Heart right ventricle (tissue), 16 donors: ENCODE measurements at regions of chr1 and their contacts with region 1.

Region 1: DNA sequence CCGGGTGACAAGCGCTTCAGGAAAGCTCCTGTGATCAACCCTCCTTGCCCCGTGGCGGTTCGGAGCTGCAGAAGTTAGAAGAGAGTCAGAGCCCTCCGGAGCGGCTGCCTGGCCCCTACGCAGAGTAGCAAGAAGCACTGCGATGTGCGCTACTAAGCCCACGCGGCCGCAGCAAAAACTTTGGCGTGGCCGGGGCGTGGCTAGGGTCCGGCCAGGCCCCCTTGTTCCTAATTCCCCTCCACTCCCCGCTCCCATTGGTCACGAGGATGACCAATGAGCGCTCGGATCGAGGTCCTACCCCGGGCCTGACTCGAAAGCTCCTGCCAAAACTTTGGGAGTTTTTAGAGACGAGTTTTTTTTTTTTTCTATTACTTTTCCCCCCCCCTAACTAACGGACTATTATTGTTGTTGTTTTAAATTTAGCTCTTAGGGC is at the start of gene HLX:
- DNase-seq: peak; percentile 90 to 95
- ATAC-seq: peak; percentile 87 to 95 (median 92)
- H3K4me3 ChIP-seq: peak within 1 kb of the TSS; percentile 70 to 98 (median 80)
- H3K27ac ChIP-seq: peak within 1 kb of the TSS; percentile 94 to 99 (median 97)
- H3K4me1 ChIP-seq: peaks cover 0 to 71% (median 37%) of the 10 kb centered on the region in 9 donors
- H3K27me3 ChIP-seq: peaks cover 0 to 26% (median 0%) of the 10 kb centered on the region in 7 donors
- CTCF ChIP-seq: no peak
- total RNA-seq, gene HLX: 4.3 to 13.8 (median 6.7) TPM

Region 2: DNA sequence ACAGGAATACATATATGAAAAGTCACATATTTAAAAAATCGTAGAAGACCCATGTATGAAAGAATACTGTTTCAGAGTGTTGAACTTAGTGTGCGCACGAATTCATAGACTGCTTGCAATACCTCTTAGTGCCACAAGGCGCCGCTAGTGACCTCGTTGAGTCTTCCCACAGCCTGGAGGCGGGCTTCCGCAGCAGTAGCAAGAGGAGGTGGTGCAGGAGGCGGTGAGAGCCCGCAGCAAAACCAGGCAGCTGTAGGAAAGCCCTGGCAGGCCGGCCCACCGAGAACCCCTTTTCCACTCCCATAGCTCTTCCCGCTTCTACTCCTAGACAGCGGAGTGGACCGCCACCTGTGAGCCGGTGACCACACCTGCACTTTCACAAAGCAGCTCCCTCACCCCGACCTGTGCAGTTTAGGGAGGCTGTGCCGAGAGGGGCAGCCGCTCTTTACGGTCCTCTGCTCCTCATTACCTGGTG is 68.9 kb before region 1 on chr1:
- intact Hi-C with region 1: loop called in 5 of 10 experiments (anchors 1 to 5 kb)
- DNase-seq: peak; percentile 79
- ATAC-seq: peak; percentile 79 to 93 (median 87)
- H3K4me3 ChIP-seq: peak overlapping the region in 8 of 10 donors; percentile 18 to 42 (median 34)
- H3K27ac ChIP-seq: peak overlapping the region in 2 of 10 donors; percentile 21 to 33
- H3K4me1 ChIP-seq: peaks cover 4 to 15% (median 12%) of the 10 kb centered on the region in 9 donors
- H3K27me3 ChIP-seq: no peaks in the 10 kb centered on the region
- CTCF ChIP-seq: peak; percentile 83 to 96 (median 95)

Region 3: GRCh38 chr1:221035680-221036153 is 156.6 kb after region 1 on chr1:
- intact Hi-C with region 1: loop called in 2 of 10 experiments (anchors 2 to 10 kb)
- DNase-seq: peak in 1 of 2 donors; percentile 13
- ATAC-seq: peak in 6 of 8 donors; percentile 51 to 87 (median 71)
- H3K4me3 ChIP-seq: no peak overlapping the region
- H3K27ac ChIP-seq: peak overlapping the region in 2 of 10 donors; percentile 9 to 39
- H3K4me1 ChIP-seq: peaks cover 0 to 33% (median 16%) of the 10 kb centered on the region in 9 donors
- H3K27me3 ChIP-seq: no peaks in the 10 kb centered on the region
- CTCF ChIP-seq: no peak

Region 4: DNA sequence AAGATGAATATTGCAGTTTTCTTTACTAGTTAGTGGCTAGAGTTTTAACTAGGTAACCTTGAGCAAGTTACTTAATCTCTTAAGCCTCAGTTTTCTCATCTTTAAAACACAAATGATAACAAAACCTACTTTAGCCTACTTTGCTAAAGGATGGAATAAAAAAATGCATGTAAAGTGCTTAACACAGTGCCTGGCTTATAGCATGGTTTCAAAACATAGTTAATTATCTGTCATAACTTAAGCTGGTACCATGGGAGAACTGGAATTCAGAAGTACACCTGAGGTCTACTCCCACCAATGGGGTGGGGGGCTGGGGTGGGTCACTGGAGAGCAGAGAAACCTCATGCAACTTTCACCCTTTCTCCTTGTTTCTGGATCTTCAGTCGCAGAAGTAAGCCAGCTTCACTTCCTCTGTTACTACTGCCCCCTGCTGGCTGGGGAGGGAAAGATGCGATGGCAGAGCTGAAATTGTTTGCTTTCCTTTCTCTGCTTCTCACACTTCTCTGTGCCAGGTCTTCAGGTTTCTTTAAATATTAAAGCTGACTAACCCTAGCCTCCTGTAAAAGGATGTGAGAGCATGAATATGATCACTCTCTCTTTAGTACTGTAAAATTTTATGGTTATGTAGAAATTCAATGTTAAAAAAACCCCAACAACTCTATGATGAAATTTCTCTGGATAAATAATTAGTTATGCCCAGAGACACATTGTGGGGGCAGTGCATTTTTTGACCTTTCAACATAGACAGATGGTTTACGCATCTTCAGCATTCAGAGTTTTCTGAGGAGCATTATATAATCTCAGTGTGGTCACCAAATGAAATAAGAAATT is 324.3 kb after region 1 on chr1:
- intact Hi-C with region 1: loop called in 7 of 10 experiments (anchors 2 to 10 kb)
- DNase-seq: peak; percentile 74 to 85
- ATAC-seq: peak; percentile 44 to 85 (median 74)
- H3K4me3 ChIP-seq: no peak overlapping the region
- H3K27ac ChIP-seq: peak overlapping the region in 9 of 10 donors; percentile 6 to 64 (median 49)
- H3K4me1 ChIP-seq: peaks cover 0 to 37% (median 25%) of the 10 kb centered on the region in 9 donors
- H3K27me3 ChIP-seq: no peaks in the 10 kb centered on the region
- CTCF ChIP-seq: peak; percentile 78 to 94 (median 92)

Region 5: GRCh38 chr1:221272940-221273339 is 393.8 kb after region 1 on chr1:
- intact Hi-C with region 1: loop called in 2 of 10 experiments (anchors 5 to 10 kb)
- DNase-seq: no peak
- ATAC-seq: peak in 1 of 8 donors; percentile 49
- H3K4me3 ChIP-seq: no peak overlapping the region
- H3K27ac ChIP-seq: no peak overlapping the region
- H3K4me1 ChIP-seq: peaks cover 0 to 2% (median 0%) of the 10 kb centered on the region in 9 donors
- H3K27me3 ChIP-seq: no peaks in the 10 kb centered on the region
- CTCF ChIP-seq: peak in 5 of 9 donors; percentile 8 to 51 (median 48)